Left ventricle myocardium superior (tissue), 1 donor: ENCODE measurements at regions of chr6 and their contacts with region 1.

Region 1: GRCh38 chr6:105484238-105485161 is 81.6 kb upstream of the PREP start:
- DNase-seq: no peak
- ATAC-seq: peak; percentile 55

Region 2: GRCh38 chr6:105553171-105553570 is 68.7 kb after region 1 on chr6:
- intact Hi-C with region 1: no loop called
- DNase-seq: no peak
- ATAC-seq: peak; percentile 20

Region 3: GRCh38 chr6:105733565-105734162 is 249.2 kb after region 1 on chr6:
- intact Hi-C with region 1: loop called (anchors 10 kb)
- DNase-seq: no peak
- ATAC-seq: no peak

Region 4: DNA sequence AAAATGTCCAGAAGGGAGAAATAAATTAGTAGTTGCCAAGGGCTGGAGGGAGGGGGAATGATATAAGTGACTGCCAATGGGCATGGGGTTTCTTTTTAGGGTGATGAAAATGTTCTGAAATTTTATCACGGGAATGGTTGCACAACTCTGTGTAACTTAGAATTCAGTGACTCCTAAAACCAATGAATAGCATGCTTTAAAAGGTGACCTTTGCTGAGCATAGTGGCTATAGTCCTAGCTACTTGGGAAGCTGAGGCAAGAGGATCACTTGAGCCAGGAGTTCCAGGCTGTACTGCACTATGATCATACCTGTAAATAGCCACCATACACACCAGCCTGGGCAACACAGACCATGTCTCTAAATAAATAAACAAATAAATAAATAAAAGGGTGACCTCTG is 732.0 kb after region 1 on chr6:
- intact Hi-C with region 1: loop called (anchors 10 kb)
- DNase-seq: no peak
- ATAC-seq: no peak